Adrenal gland (tissue), 19 donors: ENCODE measurements at regions of chr9 and their contacts with region 1.

Region 1: DNA sequence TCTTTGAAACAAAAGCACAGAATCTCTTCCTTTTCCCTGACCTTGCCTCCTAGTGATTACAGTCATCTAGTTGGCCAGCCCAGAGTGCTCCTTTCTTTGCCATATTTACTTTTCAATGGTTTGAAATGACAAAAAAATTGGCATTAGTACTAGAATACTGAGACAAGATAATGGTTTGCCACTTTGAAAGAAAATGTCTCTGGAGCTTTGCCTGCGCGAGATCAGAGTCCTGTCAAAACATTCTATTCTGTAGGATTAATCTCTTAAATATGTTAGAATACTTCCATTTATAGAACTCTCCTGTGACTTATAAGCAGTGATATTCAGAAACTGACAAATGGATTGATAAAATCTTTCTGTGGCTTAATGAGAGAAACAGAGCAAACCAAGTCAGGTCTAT is 484.0 kb upstream of the IZUMO3 start:
- DNase-seq: no peak
- H3K4me3 ChIP-seq: no peak overlapping the region
- H3K27ac ChIP-seq: no peak overlapping the region
- H3K4me1 ChIP-seq: no peaks in the 10 kb centered on the region
- H3K27me3 ChIP-seq: no peaks in the 10 kb centered on the region
- CTCF ChIP-seq: no peak
- POLR2A ChIP-seq: no peak

Region 2: DNA sequence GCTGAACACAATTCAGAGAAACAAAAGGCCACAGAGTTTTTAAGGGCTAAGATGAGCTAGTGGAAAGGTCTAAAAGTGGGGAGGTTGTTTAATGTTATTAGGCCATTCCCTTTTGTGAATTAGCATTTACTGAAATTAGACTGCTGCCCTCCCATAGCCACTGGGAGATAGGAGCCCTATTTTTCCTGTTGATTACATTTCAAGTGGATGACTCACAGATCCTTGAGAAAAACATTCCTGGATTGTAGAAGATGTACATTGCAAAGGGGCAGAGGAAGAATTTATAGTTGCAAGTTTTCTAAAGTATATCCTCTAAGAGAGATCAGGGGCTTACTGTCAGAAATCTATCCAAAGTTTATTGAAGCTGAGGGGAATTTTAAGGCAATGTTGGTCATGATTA is 117.0 kb before region 1 on chr9:
- intact Hi-C with region 1: no loop called
- DNase-seq: no peak
- H3K4me3 ChIP-seq: no peak overlapping the region
- H3K27ac ChIP-seq: no peak overlapping the region
- H3K4me1 ChIP-seq: no peaks in the 10 kb centered on the region
- H3K27me3 ChIP-seq: no peaks in the 10 kb centered on the region
- CTCF ChIP-seq: no peak
- POLR2A ChIP-seq: no peak

Region 3: GRCh38 chr9:25094518-25094917 is 64.8 kb after region 1 on chr9:
- intact Hi-C with region 1: loop called in 1 of 2 experiments (anchors 10 kb)
- DNase-seq: no peak
- H3K4me3 ChIP-seq: no peak overlapping the region
- H3K27ac ChIP-seq: no peak overlapping the region
- H3K4me1 ChIP-seq: no peaks in the 10 kb centered on the region
- H3K27me3 ChIP-seq: no peaks in the 10 kb centered on the region
- CTCF ChIP-seq: no peak
- POLR2A ChIP-seq: no peak